BJ (cell line): ENCODE measurements at regions of chr3 and their contacts with region 1.

Region 1: GRCh38 chr3:57949785-57950615 is 58.2 kb upstream of the FLNB start:
- DNase-seq: peak; percentile 13
- H3K4me3 ChIP-seq: no peak overlapping the region
- H3K27me3 ChIP-seq: no peaks in the 10 kb centered on the region
- CTCF ChIP-seq: peak; percentile 30; the same call in 1 of the 2 replicates

Region 2: DNA sequence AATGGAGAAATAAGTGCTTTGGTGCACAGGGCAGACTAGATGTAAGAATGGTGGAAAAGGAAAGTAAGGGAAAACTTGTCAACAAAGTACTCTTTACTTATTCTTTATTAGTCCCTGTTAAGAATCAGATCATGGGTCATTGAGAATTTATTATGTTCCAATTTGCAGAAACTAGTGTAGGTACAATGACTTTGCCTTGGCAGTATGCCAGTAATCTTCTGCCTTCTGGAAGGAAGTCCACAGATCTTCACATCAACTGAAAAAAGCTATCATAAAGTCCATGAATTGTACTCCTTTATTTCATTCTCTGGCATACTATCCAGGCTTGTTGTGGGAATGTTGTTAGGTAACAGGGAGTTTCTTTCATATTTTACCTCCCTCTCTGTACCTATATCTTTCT is 30.0 kb before region 1 on chr3:
- CTCF ChIA-PET with region 1: interaction called, 3 read pairs
- POLR2A ChIA-PET with region 1: interaction called, 15 read pairs
- DNase-seq: no peak
- H3K4me3 ChIP-seq: no peak overlapping the region
- H3K27me3 ChIP-seq: no peaks in the 10 kb centered on the region
- CTCF ChIP-seq: no peak